Activated naive CD4-positive, alpha-beta T cell treated with anti-CD3 and anti-CD28 coated beads, Interleukin-2, amount 10 ng/mL, durations not matched to agents 7 days and 5 days (primary cell): ENCODE measurements at regions of chr5 and their contacts with region 1.

Region 1: DNA sequence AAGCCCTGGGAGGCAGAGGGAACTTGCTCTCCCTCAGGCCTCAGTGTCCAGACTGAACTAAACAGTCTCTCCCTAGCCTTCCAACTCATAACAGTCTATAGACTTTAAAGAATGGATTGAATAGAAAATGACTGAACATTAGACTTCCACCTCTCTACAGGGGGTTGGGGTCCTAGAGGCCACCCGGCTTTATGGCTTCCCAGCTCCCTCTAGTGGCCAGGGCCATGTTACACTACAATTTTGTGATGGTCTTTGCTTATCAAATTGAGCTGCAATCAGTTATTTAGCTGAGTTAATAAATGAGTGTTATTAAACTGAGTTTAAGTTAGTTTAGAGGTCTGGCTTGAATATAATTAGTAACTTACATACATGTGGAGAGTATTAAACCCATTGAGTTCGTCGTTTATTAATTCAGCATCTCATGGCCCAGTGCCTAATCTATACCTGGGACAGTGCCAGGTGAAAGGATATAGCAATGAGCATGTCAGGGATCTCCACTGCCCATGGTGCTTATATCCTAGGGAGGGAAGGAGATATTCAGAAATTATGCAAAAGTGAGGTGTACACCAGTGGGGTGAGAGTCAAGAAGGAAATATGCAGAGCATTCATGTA is 105.2 kb downstream of the SH3TC2 start:
- DNase-seq: peak; percentile 57
- H3K4me3 Mint-ChIP-seq: no peak overlapping the region
- H3K27ac Mint-ChIP-seq: no peak overlapping the region
- H3K4me1 Mint-ChIP-seq: no peaks in the 10 kb centered on the region
- H3K27me3 Mint-ChIP-seq: peaks cover 8% of the 10 kb centered on the region

Region 2: DNA sequence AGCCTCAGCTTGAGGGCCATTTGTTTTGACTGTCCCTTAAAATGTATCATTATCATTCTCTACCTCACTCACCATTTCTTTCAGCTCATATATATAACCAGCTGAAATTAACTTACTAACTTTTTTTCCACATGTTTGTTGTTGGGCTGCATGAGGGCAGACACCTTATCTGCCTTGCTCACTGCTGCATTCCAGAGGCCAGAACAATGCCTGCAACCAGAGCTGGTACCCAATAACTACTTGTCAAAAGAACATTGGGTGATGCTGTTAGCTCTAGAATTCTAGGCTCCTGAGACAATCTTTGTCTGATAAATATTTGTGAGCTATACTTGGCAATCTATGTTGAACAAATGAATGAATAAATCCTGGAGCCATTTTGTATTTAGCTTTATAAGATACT is 371.7 kb before region 1 on chr5:
- CTCF ChIA-PET with region 1: no interaction called
- DNase-seq: no peak
- H3K4me3 Mint-ChIP-seq: no peak overlapping the region
- H3K27ac Mint-ChIP-seq: no peak overlapping the region
- H3K4me1 Mint-ChIP-seq: no peaks in the 10 kb centered on the region
- H3K27me3 Mint-ChIP-seq: no peaks in the 10 kb centered on the region

Region 3: DNA sequence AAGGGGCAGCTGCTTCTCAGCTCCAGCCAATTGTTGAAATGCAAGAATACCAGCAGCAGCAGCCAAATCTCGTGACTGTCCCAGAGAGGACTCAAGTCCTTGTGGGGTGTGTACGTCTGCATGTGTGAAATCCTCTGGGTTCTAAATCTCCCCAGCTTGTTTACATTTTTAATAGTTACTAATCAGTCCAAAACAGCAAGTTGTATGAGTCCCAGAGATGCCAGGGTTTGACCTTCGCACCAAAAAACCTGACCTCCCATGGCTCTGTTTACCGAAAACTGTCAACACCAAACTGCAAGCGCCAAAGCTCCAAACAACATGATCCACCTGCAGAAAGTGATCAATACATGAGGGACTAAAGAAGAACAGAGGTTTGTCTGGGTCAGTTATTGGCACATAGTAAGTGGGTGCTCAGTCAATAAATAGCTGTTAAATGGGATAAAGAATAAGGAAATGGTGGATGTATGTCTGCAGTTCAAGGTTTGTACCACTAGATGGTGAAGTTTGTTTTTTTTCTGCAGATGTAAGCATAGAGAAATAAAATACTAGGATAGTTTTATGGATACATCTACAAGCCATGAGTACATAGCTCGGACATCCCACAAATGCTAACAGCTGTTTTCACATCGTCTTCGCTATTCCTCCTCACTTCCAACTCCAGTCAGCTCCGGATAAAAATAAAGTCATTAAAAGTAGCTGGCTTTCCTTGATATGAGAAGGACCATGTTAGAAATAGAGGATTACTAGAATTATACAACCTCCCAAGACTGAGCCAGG is 216.5 kb before region 1 on chr5:
- CTCF ChIA-PET with region 1: interaction called, 59 read pairs
- DNase-seq: no peak
- H3K4me3 Mint-ChIP-seq: no peak overlapping the region
- H3K27ac Mint-ChIP-seq: no peak overlapping the region
- H3K4me1 Mint-ChIP-seq: peaks cover 2% of the 10 kb centered on the region
- H3K27me3 Mint-ChIP-seq: peaks cover 15% of the 10 kb centered on the region

Region 4: GRCh38 chr5:148820461-148821395 is 137.0 kb before region 1 on chr5:
- CTCF ChIA-PET with region 1: interaction called, 11 read pairs
- DNase-seq: peak; percentile 42
- H3K4me3 Mint-ChIP-seq: no peak overlapping the region
- H3K27ac Mint-ChIP-seq: no peak overlapping the region
- H3K4me1 Mint-ChIP-seq: peaks cover 10% of the 10 kb centered on the region
- H3K27me3 Mint-ChIP-seq: peaks cover 39% of the 10 kb centered on the region

Region 5: GRCh38 chr5:149114403-149115312 is 157.0 kb after region 1 on chr5:
- CTCF ChIA-PET with region 1: interaction called, 10 read pairs
- DNase-seq: peak; percentile 57
- H3K4me3 Mint-ChIP-seq: no peak overlapping the region
- H3K27ac Mint-ChIP-seq: no peak overlapping the region
- H3K4me1 Mint-ChIP-seq: no peaks in the 10 kb centered on the region
- H3K27me3 Mint-ChIP-seq: peaks cover 19% of the 10 kb centered on the region

Region 6: GRCh38 chr5:149357370-149358293 is 399.9 kb after region 1 on chr5 and contains the start of gene PCYOX1L:
- CTCF ChIA-PET with region 1: no interaction called
- DNase-seq: peak; percentile 96
- H3K4me3 Mint-ChIP-seq: peak within 1 kb of the TSS; percentile 89
- H3K27ac Mint-ChIP-seq: peak within 1 kb of the TSS; percentile 82
- H3K4me1 Mint-ChIP-seq: peaks cover 74% of the 10 kb centered on the region
- H3K27me3 Mint-ChIP-seq: no peaks in the 10 kb centered on the region